OCI-LY7 (cell line): ENCODE measurements at regions of chr3 and their contacts with region 1.

Region 1: GRCh38 chr3:32467333-32468070 is 35.1 kb downstream of the CMTM6 start:
- DNase-seq: peak; percentile 82
- H3K4me3 ChIP-seq: peak overlapping the region; percentile 44
- H3K27ac ChIP-seq: no peak overlapping the region
- H3K4me1 ChIP-seq: peaks cover 9% of the 10 kb centered on the region
- CTCF ChIP-seq: peak; percentile 89

Region 2: GRCh38 chr3:32177702-32178198 is 289.8 kb before region 1 on chr3:
- CTCF ChIA-PET with region 1: no interaction called
- POLR2A ChIA-PET with region 1: no interaction called
- intact Hi-C with region 1: loop called (anchors 5 kb)
- DNase-seq: peak; percentile 69
- H3K4me3 ChIP-seq: no peak overlapping the region
- H3K27ac ChIP-seq: no peak overlapping the region
- H3K4me1 ChIP-seq: peaks cover 6% of the 10 kb centered on the region
- CTCF ChIP-seq: peak; percentile 68

Region 3: DNA sequence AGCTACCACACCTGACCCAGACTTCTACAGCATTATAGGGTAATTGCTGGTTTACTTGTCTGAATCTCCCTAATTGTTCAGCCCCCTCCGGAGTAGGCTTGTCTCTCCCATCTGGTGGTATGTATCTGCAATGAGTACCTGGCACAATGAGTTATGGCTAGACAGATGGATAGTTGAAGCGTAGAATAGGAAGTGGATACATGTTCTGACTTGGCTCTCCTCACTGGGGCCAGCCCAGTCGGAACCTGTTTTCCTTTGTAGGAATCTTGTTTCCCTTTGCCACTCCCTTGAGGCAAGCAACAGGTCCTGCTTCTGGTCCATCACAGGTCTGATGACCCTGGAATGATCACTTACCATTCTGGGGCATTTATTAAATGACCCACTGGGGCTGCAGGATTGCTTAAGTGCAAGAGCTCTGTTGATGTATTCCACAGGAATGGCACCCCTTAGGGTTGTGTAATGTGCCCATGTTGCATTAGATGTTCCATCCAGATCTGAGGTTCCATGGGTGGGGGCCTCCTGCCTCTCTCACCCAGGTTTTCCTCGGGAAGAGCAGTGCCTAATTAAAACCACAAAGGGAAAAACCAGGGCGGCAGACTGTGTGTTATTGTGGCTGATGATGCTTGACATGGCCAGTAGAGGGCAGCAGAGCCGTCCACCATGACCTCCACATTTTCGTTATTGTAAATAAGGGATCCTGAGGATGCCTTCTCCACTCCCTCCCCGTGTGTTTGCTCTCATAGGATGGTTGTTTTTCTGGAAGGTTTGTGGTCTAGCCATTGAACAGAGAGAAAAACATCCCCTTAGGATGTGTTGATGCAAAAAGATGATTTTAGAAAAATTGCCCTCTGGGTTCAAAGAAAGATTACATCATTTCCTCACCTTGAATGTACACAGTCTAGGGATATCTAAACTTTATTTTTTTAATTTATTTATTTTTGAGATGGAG is 171.0 kb before region 1 on chr3:
- CTCF ChIA-PET with region 1: no interaction called
- POLR2A ChIA-PET with region 1: no interaction called
- intact Hi-C with region 1: loop called (anchors 1 kb)
- DNase-seq: peak; percentile 68
- H3K4me3 ChIP-seq: no peak overlapping the region
- H3K27ac ChIP-seq: no peak overlapping the region
- H3K4me1 ChIP-seq: peaks cover 6% of the 10 kb centered on the region
- CTCF ChIP-seq: peak; percentile 95

Region 4: DNA sequence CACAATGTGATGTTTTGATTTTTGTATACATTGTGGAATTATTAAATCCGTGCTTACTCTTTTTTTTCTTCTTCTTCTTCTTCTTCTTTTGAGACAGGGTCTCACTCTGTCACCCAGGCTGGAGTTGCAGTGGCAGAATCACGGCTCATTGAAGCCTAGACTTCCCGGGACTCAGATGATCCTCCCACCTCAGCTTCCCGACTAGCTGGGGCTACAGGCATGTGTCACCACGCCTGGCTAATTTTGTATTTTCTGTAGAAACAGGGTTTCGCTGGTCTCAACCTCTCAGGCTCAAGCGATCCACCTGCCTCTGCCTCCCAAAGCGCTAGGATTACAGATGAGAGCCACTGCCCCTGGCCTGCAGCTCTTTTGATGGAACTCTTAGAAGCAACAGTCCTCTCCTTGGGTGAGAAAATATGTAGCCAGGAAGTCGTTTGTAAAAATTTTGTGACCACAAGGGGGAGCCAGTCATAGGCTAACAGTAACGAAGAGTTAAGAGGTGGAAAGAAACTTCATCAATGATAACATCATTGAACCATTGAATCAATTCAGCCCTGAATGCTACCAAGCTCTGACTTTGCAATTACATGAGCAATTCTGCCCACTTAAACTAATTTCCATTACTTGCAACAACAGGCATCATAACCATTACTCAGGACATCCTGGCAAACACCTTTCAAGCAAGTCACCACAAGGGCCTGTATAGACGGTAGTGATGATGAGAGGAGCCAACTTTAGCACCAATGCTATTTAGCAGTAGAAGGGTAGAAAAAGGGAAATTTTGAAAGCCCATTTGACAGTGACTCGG is 92.5 kb before region 1 on chr3:
- CTCF ChIA-PET with region 1: interaction called, 6 read pairs
- POLR2A ChIA-PET with region 1: interaction called, 4 read pairs
- intact Hi-C with region 1: loop called (anchors 1 kb)
- DNase-seq: peak; percentile 82
- H3K4me3 ChIP-seq: no peak overlapping the region
- H3K27ac ChIP-seq: no peak overlapping the region
- H3K4me1 ChIP-seq: peaks cover 10% of the 10 kb centered on the region
- CTCF ChIP-seq: peak; percentile 91

Region 5: GRCh38 chr3:32420126-32421038 is 47.1 kb before region 1 on chr3:
- CTCF ChIA-PET with region 1: interaction called, 5 read pairs
- POLR2A ChIA-PET with region 1: interaction called, 4 read pairs
- intact Hi-C with region 1: loop called (anchors 1 kb)
- DNase-seq: peak; percentile 74
- H3K4me3 ChIP-seq: peak overlapping the region; percentile 47
- H3K27ac ChIP-seq: peak overlapping the region; percentile 90
- H3K4me1 ChIP-seq: peaks cover 78% of the 10 kb centered on the region
- CTCF ChIP-seq: no peak